Activated CD8-positive, alpha-beta memory T cell treated with anti-CD3 and anti-CD28 coated beads, Interleukin-2, amount 10 ng/mL, durations not matched to agents 7 days and 5 days (primary cell): ENCODE measurements at regions of chr10 and their contacts with region 1.

Region 1: GRCh38 chr10:119103903-119104652 is at the start of gene DENND10:
- DNase-seq: peak; percentile 83
- ATAC-seq: peak; percentile 88
- H3K4me3 Mint-ChIP-seq: peak within 1 kb of the TSS; percentile 77
- H3K27ac Mint-ChIP-seq: peak within 1 kb of the TSS; percentile 59
- H3K4me1 Mint-ChIP-seq: peaks cover 34% of the 10 kb centered on the region
- H3K27me3 Mint-ChIP-seq: peaks cover 2% of the 10 kb centered on the region
- total RNA-seq, gene DENND10: 41.2 to 47.4 TPM

Region 2: GRCh38 chr10:119090968-119091367 is 13.1 kb before region 1 on chr10:
- CTCF ChIA-PET with region 1: interaction called, 12 read pairs
- DNase-seq: peak; percentile 82
- ATAC-seq: peak; percentile 85
- H3K4me3 Mint-ChIP-seq: peak overlapping the region; percentile 58
- H3K27ac Mint-ChIP-seq: peak overlapping the region; percentile 97
- H3K4me1 Mint-ChIP-seq: peaks cover 39% of the 10 kb centered on the region
- H3K27me3 Mint-ChIP-seq: no peaks in the 10 kb centered on the region

Region 3: GRCh38 chr10:119217991-119218490 is 114.0 kb after region 1 on chr10:
- CTCF ChIA-PET with region 1: no interaction called
- DNase-seq: no peak
- ATAC-seq: no peak
- H3K4me3 Mint-ChIP-seq: no peak overlapping the region
- H3K27ac Mint-ChIP-seq: no peak overlapping the region
- H3K4me1 Mint-ChIP-seq: peaks cover 20% of the 10 kb centered on the region
- H3K27me3 Mint-ChIP-seq: no peaks in the 10 kb centered on the region